Activated CD4-positive, alpha-beta T cell treated with anti-CD3 and anti-CD28 coated beads for 36 hours (primary cell): ENCODE measurements at regions of chr2 and their contacts with region 1.

Region 1: GRCh38 chr2:190255676-190256075 is 64.0 kb downstream of the HIBCH start:
- DNase-seq: peak; percentile 11
- ATAC-seq: peak; percentile 94
- H3K4me3 Mint-ChIP-seq: no peak overlapping the region
- H3K27ac Mint-ChIP-seq: no peak overlapping the region
- H3K4me1 Mint-ChIP-seq: peaks cover 2% of the 10 kb centered on the region
- H3K27me3 Mint-ChIP-seq: no peaks in the 10 kb centered on the region

Region 2: GRCh38 chr2:189819297-189819704 is 436.4 kb before region 1 on chr2:
- CTCF ChIA-PET with region 1: no interaction called
- POLR2A ChIA-PET with region 1: no interaction called
- intact Hi-C with region 1: loop called in 1 of 2 experiments (anchors 1 kb)
- DNase-seq: no peak
- ATAC-seq: peak; percentile 80
- H3K4me3 Mint-ChIP-seq: no peak overlapping the region
- H3K27ac Mint-ChIP-seq: peak overlapping the region; percentile 91
- H3K4me1 Mint-ChIP-seq: peaks cover 19% of the 10 kb centered on the region
- H3K27me3 Mint-ChIP-seq: no peaks in the 10 kb centered on the region

Region 3: DNA sequence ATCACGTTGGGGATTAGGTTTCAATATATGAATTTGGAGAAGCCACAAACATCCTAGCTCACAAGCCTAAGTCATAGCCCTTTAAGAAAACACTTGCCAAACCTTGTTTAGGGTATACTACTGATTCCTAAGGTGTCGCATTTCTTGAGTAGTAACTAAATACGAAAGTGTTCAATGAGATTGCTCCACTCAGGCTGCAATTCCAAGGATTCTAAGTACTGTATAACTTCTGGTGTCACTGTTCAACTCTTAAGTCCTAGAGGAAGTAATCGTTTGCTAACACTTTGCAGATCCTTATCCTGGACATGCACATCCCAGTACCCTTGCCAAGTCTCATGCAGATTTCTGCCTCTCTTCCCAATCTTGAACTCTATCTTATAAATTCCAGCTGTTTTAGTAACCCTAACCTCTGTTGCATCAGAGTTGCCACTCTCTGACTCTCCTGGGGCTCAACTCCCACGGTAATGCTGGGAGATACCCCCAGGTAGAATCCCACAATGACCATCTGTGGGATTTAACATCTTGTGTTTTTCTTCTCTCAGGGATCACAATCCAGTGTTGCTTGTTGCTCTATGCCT is 58.4 kb before region 1 on chr2:
- CTCF ChIA-PET with region 1: no interaction called
- POLR2A ChIA-PET with region 1: no interaction called
- intact Hi-C with region 1: no loop called
- DNase-seq: no peak
- ATAC-seq: no peak
- H3K4me3 Mint-ChIP-seq: no peak overlapping the region
- H3K27ac Mint-ChIP-seq: no peak overlapping the region
- H3K4me1 Mint-ChIP-seq: no peaks in the 10 kb centered on the region
- H3K27me3 Mint-ChIP-seq: no peaks in the 10 kb centered on the region

Region 4: DNA sequence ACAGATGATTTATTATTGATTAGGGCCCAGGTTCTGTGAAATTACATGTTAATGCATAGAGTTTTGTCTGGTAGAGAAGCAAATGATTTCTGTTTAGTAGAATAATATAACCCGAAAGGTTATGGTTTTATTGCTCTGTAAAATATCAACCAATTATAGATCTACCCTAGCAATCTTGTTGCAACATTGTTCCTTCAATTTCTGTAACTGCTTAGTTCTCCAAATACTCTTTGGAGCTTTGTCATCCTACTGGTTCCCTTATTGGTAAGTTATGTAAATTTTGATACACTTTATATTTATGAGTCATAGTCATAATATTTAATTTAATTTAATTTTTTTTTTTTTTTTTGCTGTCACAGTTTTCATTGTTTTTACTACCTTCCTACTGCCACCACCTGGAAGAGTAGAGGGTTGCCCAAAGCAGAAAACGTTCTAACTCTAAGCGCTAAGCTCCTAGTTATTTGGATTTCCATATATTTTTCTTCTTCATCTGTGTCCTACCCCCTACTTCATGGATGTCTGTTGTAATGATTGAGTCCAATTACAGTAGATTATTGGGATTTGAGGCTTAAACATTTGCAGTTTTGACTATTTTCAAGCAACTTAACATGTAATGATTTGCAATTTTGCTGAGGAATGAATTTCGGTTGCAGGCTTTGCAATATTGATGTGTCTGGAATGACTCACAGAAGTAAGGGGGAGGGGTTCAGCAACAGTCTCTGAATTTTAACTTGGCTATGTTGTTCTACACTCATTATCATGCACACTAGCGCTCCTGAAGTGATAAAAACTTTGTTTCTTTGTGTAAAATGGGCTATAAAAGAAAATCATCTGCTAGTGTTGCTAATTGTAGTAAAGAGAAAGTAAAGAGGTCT is 1473.3 kb after region 1 on chr2:
- CTCF ChIA-PET with region 1: no interaction called
- POLR2A ChIA-PET with region 1: no interaction called
- intact Hi-C with region 1: no loop called
- DNase-seq: no peak
- ATAC-seq: peak; percentile 42
- H3K4me3 Mint-ChIP-seq: no peak overlapping the region
- H3K27ac Mint-ChIP-seq: no peak overlapping the region
- H3K4me1 Mint-ChIP-seq: no peaks in the 10 kb centered on the region
- H3K27me3 Mint-ChIP-seq: peaks cover 4% of the 10 kb centered on the region